AG04450 (cell line): ENCODE measurements at regions of chr2 and their contacts with region 1.

Region 1: DNA sequence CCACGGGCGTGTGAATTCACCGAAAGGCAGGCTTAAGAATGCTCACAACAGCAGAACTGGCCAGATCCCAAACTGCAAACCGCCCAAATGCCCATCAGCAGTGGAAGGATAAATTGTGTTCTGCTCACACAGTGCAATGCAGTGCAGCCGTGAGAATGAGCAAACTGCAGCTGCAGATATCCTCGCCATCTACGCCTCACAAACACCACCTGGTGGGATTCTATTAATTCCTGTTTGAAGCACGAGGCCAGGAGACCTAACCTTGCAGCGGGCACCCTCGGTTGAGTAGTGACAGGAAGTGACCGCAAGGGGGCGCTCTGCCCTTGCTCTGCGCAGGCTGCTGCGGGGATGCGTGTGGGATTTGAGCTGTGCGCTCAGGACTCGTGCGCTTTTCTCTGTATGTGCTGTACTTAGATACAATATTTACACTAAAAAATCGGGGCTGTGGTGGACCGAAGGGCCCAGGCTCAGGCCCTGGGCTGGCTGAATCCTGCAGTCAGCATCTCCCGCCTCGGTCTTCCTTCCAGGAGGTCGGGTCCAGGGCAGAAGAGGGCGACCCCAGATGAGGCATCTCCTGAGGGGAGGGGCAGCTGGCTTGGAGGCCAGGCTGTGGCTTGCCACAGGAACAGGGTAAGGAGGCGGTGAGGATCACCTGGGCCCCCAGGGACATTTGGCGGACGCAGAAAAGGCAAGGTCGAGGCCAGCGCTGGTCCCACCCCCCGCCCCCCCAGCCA is 19.8 kb upstream of the PDIA6 start:
- DNase-seq: peak; percentile 63
- H3K4me3 ChIP-seq: no peak overlapping the region
- H3K27ac ChIP-seq: no peak overlapping the region
- H3K27me3 ChIP-seq: peaks cover 36% of the 10 kb centered on the region
- CTCF ChIP-seq: peak; percentile 98

Region 2: DNA sequence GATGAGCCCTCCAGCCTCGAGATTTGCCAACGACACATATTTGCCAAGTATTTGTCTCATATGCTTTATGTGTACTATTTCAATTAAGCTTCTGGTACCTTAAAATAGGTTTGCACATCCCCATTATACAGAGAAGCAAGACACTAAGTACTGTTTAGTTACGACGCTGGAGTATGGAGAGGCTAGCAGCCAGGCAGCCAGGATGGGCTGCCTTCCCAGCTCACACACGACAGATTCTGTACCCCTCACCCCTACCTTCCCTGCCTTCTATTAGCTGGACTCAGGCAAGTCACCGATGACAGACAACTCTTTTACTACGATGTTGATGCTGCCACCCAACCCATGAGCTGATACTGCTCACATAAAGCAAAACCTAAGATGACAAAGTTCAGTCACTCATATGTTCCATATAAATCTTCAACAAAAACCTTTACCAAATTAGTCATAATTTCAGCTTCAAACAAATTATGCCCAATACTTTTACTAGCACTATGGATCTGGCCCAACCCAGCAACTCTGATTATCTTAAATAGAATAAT is 36.8 kb before region 1 on chr2:
- CTCF ChIA-PET with region 1: interaction called, 11 read pairs
- POLR2A ChIA-PET with region 1: no interaction called
- DNase-seq: no peak
- H3K4me3 ChIP-seq: no peak overlapping the region
- H3K27ac ChIP-seq: no peak overlapping the region
- H3K27me3 ChIP-seq: no peaks in the 10 kb centered on the region
- CTCF ChIP-seq: no peak

Region 3: GRCh38 chr2:10846110-10846861 is 13.9 kb after region 1 on chr2:
- CTCF ChIA-PET with region 1: interaction called, 13 read pairs
- POLR2A ChIA-PET with region 1: no interaction called
- DNase-seq: no peak
- H3K4me3 ChIP-seq: no peak overlapping the region
- H3K27ac ChIP-seq: no peak overlapping the region
- H3K27me3 ChIP-seq: peaks cover 8% of the 10 kb centered on the region
- CTCF ChIP-seq: no peak

Region 4: GRCh38 chr2:10900216-10901109 is 68.1 kb after region 1 on chr2:
- CTCF ChIA-PET with region 1: interaction called, 18 read pairs
- POLR2A ChIA-PET with region 1: no interaction called
- DNase-seq: no peak
- H3K4me3 ChIP-seq: no peak overlapping the region
- H3K27ac ChIP-seq: no peak overlapping the region
- H3K27me3 ChIP-seq: no peaks in the 10 kb centered on the region
- CTCF ChIP-seq: peak; percentile 47

Region 5: GRCh38 chr2:11124503-11125068 is 292.2 kb after region 1 on chr2:
- CTCF ChIA-PET with region 1: interaction called, 360 read pairs
- POLR2A ChIA-PET with region 1: no interaction called
- DNase-seq: no peak
- H3K4me3 ChIP-seq: no peak overlapping the region
- H3K27ac ChIP-seq: no peak overlapping the region
- H3K27me3 ChIP-seq: no peaks in the 10 kb centered on the region
- CTCF ChIP-seq: peak; percentile 95